ENCODE measurements at regions of chr17 and their contacts with region 1.

Region 1: DNA sequence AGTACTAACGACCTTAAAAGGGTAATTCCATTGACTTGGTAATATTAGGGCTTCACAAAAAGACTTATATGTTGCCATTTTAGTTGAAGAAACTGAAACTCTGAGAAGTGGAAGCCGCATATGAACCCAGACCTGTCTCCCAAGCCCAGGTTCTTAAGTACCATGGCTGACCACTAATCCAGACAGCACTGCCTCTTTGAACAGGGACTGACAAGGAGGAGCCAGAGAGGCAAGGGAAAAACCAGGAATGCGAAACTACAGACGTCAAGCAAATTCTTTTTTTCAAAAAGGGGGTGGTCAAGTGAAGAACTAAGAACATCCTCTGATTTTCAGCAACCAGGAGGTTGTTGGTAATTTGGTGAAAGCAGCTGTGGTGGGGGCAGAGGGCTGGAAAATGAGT is 15.2 kb downstream of the CYB5D1 start:
- DNase-seq: no peak
- H3K4me3 ChIP-seq: no peak overlapping the region
- H3K27ac ChIP-seq: no peak overlapping the region
- H3K4me1 ChIP-seq: peaks cover 0 to 6% (median 2%) of the 10 kb centered on the region in 4 donors
- H3K27me3 ChIP-seq: no peaks in the 10 kb centered on the region
- CTCF ChIP-seq: no peak
- EP300 ChIP-seq: no peak
- POLR2A ChIP-seq: no peak

Region 2: GRCh38 chr17:7825206-7825990 is 47.7 kb before region 1 on chr17:
- in situ Hi-C with region 1: no loop called
- intact Hi-C with region 1: no loop called
- DNase-seq: no peak
- H3K4me3 ChIP-seq: no peak overlapping the region
- H3K27ac ChIP-seq: no peak overlapping the region
- H3K4me1 ChIP-seq: no peaks in the 10 kb centered on the region
- H3K27me3 ChIP-seq: no peaks in the 10 kb centered on the region
- CTCF ChIP-seq: no peak
- EP300 ChIP-seq: no peak
- POLR2A ChIP-seq: no peak

Region 3: GRCh38 chr17:7982666-7983065 is 109.6 kb after region 1 on chr17:
- in situ Hi-C with region 1: loop called in 2 of 4 experiments (anchors 25 kb)
- intact Hi-C with region 1: loop called (anchors 5 kb)
- DNase-seq: no peak
- H3K4me3 ChIP-seq: no peak overlapping the region
- H3K27ac ChIP-seq: no peak overlapping the region
- H3K4me1 ChIP-seq: no peaks in the 10 kb centered on the region
- H3K27me3 ChIP-seq: no peaks in the 10 kb centered on the region
- CTCF ChIP-seq: no peak
- EP300 ChIP-seq: no peak
- POLR2A ChIP-seq: no peak